ENCODE measurements at regions of chr3 and their contacts with region 1.

Region 1: GRCh38 chr3:14452679-14453367 is 50.4 kb downstream of the SLC6A6 start:
- DNase-seq: peak; percentile 100
- H3K4me3 ChIP-seq: no peak overlapping the region
- H3K27ac ChIP-seq: peak overlapping the region; percentile 89
- H3K4me1 ChIP-seq: peaks cover 25% of the 10 kb centered on the region
- H3K27me3 ChIP-seq: no peaks in the 10 kb centered on the region
- CTCF ChIP-seq: peak in 1 of 2 donors; percentile 7
- POLR2A ChIP-seq: no peak

Region 2: GRCh38 chr3:14144423-14145075 is 308.3 kb before region 1 on chr3:
- CTCF ChIA-PET with region 1: no interaction called
- POLR2A ChIA-PET with region 1: no interaction called
- dilution Hi-C with region 1: no loop called
- intact Hi-C with region 1: loop called (anchors 5 kb)
- DNase-seq: peak; percentile 97
- H3K4me3 ChIP-seq: peak overlapping the region in 1 of 3 experiments; percentile 20
- H3K27ac ChIP-seq: peak overlapping the region; percentile 100
- H3K4me1 ChIP-seq: peaks cover 41% of the 10 kb centered on the region
- H3K27me3 ChIP-seq: no peaks in the 10 kb centered on the region
- CTCF ChIP-seq: no peak
- POLR2A ChIP-seq: peak; percentile 69

Region 3: DNA sequence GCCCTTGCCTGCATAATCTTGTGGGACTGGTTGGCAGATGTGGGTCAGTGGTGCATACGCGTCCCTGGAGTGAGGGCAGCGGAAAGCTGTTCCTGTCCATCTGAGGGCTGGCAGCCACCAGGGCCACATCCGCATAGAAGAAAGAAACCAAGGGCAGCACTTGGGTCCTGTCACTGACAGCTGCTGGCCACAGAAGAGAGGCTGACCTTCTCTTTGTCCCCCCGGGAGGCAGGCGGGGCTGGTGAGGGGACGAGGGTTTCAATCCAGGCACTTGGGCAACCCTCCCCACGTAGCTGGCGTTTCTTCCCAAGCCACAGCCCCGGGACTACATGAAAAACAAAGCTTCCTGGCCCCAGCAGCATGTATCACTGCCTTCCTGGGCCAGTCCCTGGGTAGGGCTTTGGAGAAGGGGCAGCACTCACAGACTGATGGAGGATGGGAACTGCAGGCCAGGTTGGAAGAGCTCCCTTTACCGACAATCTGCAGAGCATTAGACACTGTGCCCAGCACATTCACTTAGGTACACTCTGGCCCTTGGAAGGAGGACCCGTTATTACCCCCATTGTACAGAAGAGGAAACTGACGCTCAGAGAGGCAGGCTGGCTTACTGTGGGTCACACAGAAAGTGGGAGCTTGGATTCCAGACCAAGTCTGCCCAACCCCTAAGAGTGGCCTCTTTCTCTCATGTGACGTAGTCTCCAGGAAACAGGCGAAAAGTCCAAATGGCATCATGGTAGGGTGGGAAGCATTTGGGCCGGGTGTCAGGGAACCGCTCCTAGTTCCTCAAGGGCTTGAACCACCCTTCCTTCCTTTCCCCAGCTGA is 129.2 kb before region 1 on chr3:
- CTCF ChIA-PET with region 1: no interaction called
- POLR2A ChIA-PET with region 1: no interaction called
- dilution Hi-C with region 1: no loop called
- intact Hi-C with region 1: loop called (anchors 2 kb)
- DNase-seq: peak; percentile 8
- H3K4me3 ChIP-seq: no peak overlapping the region
- H3K27ac ChIP-seq: peak overlapping the region; percentile 28
- H3K4me1 ChIP-seq: peaks cover 15% of the 10 kb centered on the region
- H3K27me3 ChIP-seq: peaks cover 0 to 2% of the 10 kb centered on the region in 2 experiments
- CTCF ChIP-seq: no peak
- POLR2A ChIP-seq: no peak

Region 4: GRCh38 chr3:14431892-14432834 is 20.7 kb before region 1 on chr3:
- CTCF ChIA-PET with region 1: interaction called, 4 read pairs
- POLR2A ChIA-PET with region 1: interaction called, 5 read pairs
- dilution Hi-C with region 1: no loop called
- intact Hi-C with region 1: loop called (anchors 1 kb)
- DNase-seq: peak; percentile 83
- H3K4me3 ChIP-seq: no peak overlapping the region
- H3K27ac ChIP-seq: peak overlapping the region; percentile 77
- H3K4me1 ChIP-seq: peaks cover 56% of the 10 kb centered on the region
- H3K27me3 ChIP-seq: no peaks in the 10 kb centered on the region
- CTCF ChIP-seq: no peak
- POLR2A ChIP-seq: no peak

Region 5: DNA sequence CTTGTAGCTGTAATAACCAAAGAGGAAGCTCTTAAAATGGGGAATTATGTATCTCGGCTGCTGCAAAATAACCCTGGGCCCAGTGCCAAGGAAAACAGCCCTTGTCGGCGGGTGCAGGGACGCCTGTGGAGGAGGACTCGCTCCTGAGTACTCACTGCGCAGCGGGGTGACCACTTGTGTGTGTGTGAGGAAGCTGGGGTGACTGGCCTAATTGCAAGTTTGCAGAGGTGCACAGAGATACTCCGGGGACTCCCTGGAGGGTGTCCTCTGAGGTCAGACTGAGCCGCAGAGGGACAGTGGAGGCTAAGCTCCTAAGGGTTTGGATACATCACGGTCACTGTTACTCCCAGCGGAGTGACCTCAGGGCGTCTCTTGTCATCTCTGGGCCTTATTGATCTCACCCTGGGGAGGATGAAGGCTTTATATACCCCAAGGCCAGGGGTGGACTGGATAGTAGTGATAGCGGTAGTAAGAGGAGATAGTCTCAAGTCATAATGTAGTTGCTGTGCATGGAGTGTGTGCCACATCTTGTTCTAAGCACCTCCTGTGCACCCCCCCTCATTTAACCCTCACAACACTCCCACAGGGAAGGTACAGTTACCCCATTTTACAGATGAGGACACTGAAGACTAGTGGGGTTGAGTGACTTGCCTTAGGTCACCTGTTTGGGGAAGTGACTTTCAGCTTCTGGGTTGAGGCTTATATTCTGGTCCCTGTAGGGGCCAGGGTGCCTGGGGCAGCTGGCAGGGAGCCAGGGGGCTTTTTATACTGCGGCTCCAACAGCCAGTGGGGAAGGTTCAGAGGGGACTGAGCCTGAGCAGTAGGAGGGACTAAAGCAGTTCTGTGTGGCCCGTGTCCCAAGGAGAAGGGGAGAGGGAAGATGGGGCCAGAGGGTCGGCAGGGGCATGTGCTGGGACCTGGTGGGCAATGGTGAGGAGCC is 13.0 kb before region 1 on chr3:
- CTCF ChIA-PET with region 1: interaction called, 34 read pairs
- POLR2A ChIA-PET with region 1: interaction called, 20 read pairs
- dilution Hi-C with region 1: no loop called
- intact Hi-C with region 1: loop called (anchors 1 kb)
- DNase-seq: peak; percentile 88
- H3K4me3 ChIP-seq: no peak overlapping the region
- H3K27ac ChIP-seq: peak overlapping the region; percentile 23
- H3K4me1 ChIP-seq: peaks cover 51% of the 10 kb centered on the region
- H3K27me3 ChIP-seq: no peaks in the 10 kb centered on the region
- CTCF ChIP-seq: no peak
- POLR2A ChIP-seq: no peak

Region 6: GRCh38 chr3:14626881-14627411 is 174.1 kb after region 1 on chr3:
- CTCF ChIA-PET with region 1: no interaction called
- POLR2A ChIA-PET with region 1: no interaction called
- dilution Hi-C with region 1: no loop called
- intact Hi-C with region 1: no loop called
- DNase-seq: no peak
- H3K4me3 ChIP-seq: no peak overlapping the region
- H3K27ac ChIP-seq: no peak overlapping the region
- H3K4me1 ChIP-seq: no peaks in the 10 kb centered on the region
- H3K27me3 ChIP-seq: peaks cover 4 to 7% of the 10 kb centered on the region in 2 experiments
- CTCF ChIP-seq: no peak
- POLR2A ChIP-seq: no peak